ENCODE measurements at regions of chr10 and their contacts with region 1.

Region 1: DNA sequence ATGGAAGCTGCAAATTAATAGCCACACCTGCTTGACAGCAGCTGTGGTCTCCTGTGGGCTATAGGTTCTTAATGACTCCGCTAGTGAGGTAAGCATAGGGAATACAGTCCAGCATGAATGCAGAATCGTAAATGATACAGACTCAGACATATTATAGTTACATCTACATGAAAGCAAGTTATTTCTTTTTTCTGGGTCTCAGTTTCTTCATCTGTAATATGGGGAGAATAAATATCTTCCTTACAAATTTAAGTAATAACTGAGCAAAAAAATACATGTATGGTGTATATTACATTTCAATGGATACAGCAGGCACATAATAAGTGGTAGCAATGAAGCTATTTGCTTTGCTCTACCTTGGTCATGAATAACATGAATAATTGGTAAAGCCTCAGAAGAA is 245.9 kb upstream of the RHOBTB1 start:
- DNase-seq: no peak
- H3K4me3 ChIP-seq: no peak overlapping the region
- H3K27ac ChIP-seq: no peak overlapping the region
- H3K4me1 ChIP-seq: no peaks in the 10 kb centered on the region
- H3K27me3 ChIP-seq: no peaks in the 10 kb centered on the region
- CTCF ChIP-seq: no peak

Region 2: DNA sequence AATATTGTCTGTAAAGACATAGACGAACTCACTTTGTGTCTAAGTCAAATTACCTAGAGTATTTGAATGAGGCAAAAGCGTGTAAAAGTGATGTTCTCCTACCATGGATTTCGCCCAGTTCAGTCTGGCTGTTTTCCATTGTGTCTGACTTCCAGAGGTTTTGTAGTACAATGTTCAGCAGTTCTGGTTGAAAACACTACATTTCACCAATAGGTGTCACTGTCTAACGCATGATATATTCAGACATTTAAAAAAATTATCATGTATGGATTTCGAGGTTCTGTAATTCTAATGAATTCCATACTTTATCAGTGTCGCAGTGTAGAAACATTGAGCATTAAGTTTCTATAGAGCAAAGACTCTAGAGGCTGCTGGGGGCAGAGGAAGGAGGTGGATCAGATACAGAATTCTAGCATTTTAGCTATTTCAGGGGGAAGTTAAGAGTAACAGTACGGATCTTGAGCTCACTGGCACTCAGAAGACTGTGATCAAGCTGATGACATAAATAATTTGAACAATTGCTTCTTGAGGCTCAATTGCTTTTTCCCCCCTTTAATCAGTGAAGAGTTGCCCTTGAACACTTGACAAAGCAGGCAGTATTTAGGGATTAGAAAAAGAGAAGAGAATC is 49.0 kb before region 1 on chr10:
- CTCF ChIA-PET with region 1: no interaction called
- dilution Hi-C with region 1: no loop called
- in situ Hi-C with region 1: no loop called
- intact Hi-C with region 1: loop called (anchors 2 kb)
- DNase-seq: peak; percentile 41
- H3K4me3 ChIP-seq: no peak overlapping the region
- H3K27ac ChIP-seq: no peak overlapping the region
- H3K4me1 ChIP-seq: no peaks in the 10 kb centered on the region
- H3K27me3 ChIP-seq: no peaks in the 10 kb centered on the region
- CTCF ChIP-seq: peak; percentile 59 to 61

Region 3: DNA sequence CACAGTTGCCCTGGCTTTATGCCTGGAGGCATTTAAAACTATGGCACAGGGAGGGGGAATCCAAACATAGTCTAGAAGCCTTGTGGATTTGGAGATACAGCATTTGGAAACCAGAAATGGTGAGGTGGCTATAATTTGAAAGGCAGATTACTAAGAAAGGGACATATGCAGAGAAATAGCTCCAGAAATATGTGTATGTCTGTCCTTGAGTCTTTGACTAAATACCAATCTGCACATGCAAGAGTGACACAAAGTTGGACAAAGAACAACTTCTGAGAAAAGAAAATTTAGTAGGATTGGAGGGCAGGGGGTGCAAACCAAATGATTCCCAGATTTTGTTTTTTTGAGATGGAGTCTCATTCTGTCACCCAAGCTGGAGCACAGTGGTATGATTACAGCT is 33.7 kb after region 1 on chr10:
- CTCF ChIA-PET with region 1: no interaction called
- dilution Hi-C with region 1: no loop called
- in situ Hi-C with region 1: no loop called
- intact Hi-C with region 1: no loop called
- DNase-seq: no peak
- H3K4me3 ChIP-seq: no peak overlapping the region
- H3K27ac ChIP-seq: no peak overlapping the region
- H3K4me1 ChIP-seq: no peaks in the 10 kb centered on the region
- H3K27me3 ChIP-seq: no peaks in the 10 kb centered on the region
- CTCF ChIP-seq: no peak

Region 4: GRCh38 chr10:62217683-62218082 is 1027.8 kb after region 1 on chr10:
- CTCF ChIA-PET with region 1: no interaction called
- dilution Hi-C with region 1: no loop called
- in situ Hi-C with region 1: no loop called
- intact Hi-C with region 1: no loop called
- DNase-seq: no peak
- H3K4me3 ChIP-seq: no peak overlapping the region
- H3K27ac ChIP-seq: no peak overlapping the region
- H3K4me1 ChIP-seq: no peaks in the 10 kb centered on the region
- H3K27me3 ChIP-seq: no peaks in the 10 kb centered on the region
- CTCF ChIP-seq: no peak

Measured in mammary epithelial cell (primary cell).